Right cardiac atrium (tissue), 5 donors: ENCODE measurements at regions of chr10 and their contacts with region 1.

Region 1: GRCh38 chr10:75235375-75236177 is at the start of gene COMTD1:
- DNase-seq: peak; percentile 94 to 97 (median 97)
- ATAC-seq: peak; percentile 80 to 81
- H3K4me3 ChIP-seq: peak within 1 kb of the TSS; percentile 85
- H3K27ac ChIP-seq: peak within 1 kb of the TSS; percentile 61
- H3K4me1 ChIP-seq: no peaks in the 10 kb centered on the region
- H3K27me3 ChIP-seq: no peaks in the 10 kb centered on the region
- total RNA-seq, gene COMTD1: 17.3 to 24.3 (median 20.0) TPM

Region 2: DNA sequence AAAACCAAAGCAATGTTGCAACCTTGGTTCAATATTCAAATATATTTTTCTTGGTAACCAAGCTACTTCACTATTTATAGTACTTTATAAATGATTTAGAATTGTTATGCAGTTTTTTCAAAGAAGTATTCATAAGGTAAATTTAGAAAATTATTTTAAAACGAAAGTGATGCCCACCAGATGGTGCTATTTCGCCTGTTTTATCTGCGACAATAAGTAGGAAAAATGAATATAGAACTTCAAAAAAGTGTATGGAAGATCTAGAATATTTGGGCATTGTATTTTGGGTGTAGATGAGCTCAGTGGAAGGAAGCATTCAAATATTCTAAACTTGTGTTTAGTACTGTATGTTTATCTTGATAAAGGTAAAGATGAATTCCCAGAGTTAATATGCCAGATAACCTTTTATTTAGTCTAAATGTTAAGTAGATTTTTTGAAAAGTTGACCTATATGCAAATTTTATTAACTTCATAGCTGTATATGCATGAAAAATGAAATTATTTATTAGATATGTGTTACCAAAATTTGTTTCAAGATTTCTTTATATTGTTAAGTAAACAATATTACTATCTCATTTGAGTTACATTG is 991.4 kb before region 1 on chr10:
- intact Hi-C with region 1: loop called in 3 of 4 experiments (anchors 5 to 10 kb)
- DNase-seq: no peak
- ATAC-seq: no peak
- H3K4me3 ChIP-seq: no peak overlapping the region
- H3K27ac ChIP-seq: no peak overlapping the region
- H3K4me1 ChIP-seq: no peaks in the 10 kb centered on the region
- H3K27me3 ChIP-seq: no peaks in the 10 kb centered on the region

Region 3: DNA sequence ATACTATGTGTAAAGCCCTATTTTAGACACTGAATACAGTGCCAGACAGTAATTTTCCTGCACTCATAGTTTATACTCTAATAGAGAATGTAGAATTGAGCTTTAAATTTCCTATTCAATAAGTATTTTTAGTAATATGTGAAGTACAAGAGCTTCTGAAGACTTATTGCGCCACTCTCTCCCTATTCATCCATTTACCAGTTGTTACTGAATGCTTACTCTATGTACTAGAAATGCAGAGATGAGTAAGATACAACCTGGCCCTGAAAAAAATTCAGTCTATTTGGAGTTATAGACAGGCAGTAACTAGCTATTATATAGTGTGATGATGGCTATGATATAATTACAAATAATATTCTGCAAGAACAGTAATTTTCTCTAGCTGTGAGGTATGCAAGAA is 985.7 kb before region 1 on chr10:
- intact Hi-C with region 1: loop called in 2 of 4 experiments (anchors 5 to 10 kb)
- DNase-seq: no peak
- ATAC-seq: no peak
- H3K4me3 ChIP-seq: no peak overlapping the region
- H3K27ac ChIP-seq: no peak overlapping the region
- H3K4me1 ChIP-seq: no peaks in the 10 kb centered on the region
- H3K27me3 ChIP-seq: no peaks in the 10 kb centered on the region

Region 4: GRCh38 chr10:74826142-74827044 is 409.2 kb before region 1 on chr10 and contains the start of gene KAT6B:
- intact Hi-C with region 1: loop called in 1 of 4 experiments (anchors 10 kb)
- DNase-seq: peak; percentile 100
- ATAC-seq: peak; percentile 96
- H3K4me3 ChIP-seq: peak within 1 kb of the TSS; percentile 75
- H3K27ac ChIP-seq: peak within 1 kb of the TSS; percentile 100
- H3K4me1 ChIP-seq: peaks cover 5% of the 10 kb centered on the region
- H3K27me3 ChIP-seq: no peaks in the 10 kb centered on the region
- total RNA-seq, gene KAT6B: 44.1 to 53.0 (median 46.7) TPM

Region 5: GRCh38 chr10:75111367-75111906 is 124.1 kb before region 1 on chr10 and contains the start of gene SAMD8:
- intact Hi-C with region 1: loop called in 1 of 4 experiments (anchors 5 kb)
- DNase-seq: peak; percentile 98 to 99 (median 99)
- ATAC-seq: peak; percentile 91 to 92
- H3K4me3 ChIP-seq: peak within 1 kb of the TSS; percentile 86
- H3K27ac ChIP-seq: peak within 1 kb of the TSS; percentile 97
- H3K4me1 ChIP-seq: peaks cover 3% of the 10 kb centered on the region
- H3K27me3 ChIP-seq: no peaks in the 10 kb centered on the region
- total RNA-seq, gene SAMD8: 21.4 to 26.7 (median 24.5) TPM

Region 6: DNA sequence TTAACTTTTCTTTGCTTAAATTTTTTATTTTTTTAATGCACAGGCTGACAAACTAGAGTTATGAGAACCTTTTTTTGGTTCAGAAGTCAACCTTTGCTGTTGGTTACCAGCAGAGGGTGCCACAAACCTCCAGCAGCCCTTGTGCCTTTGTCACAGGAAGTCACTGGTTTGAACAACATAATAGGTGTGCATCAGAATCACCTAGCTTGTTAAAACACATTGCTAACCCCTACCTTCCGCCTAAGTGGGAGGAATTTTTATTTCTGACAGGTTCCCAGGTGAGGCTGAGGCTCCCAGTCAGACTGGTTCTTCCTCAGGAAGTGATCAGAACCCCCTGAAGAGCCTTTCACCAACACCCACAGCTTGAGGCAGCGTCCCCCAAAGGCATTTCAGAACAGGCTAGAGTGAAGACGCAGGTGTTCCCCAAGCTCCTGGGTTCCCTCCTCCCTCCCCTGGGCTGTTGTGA is 47.6 kb before region 1 on chr10:
- intact Hi-C with region 1: loop called in 1 of 4 experiments (anchors 5 kb)
- DNase-seq: peak in 1 of 3 donors; percentile 38
- ATAC-seq: no peak
- H3K4me3 ChIP-seq: no peak overlapping the region
- H3K27ac ChIP-seq: no peak overlapping the region
- H3K4me1 ChIP-seq: no peaks in the 10 kb centered on the region
- H3K27me3 ChIP-seq: no peaks in the 10 kb centered on the region

Region 7: GRCh38 chr10:75250910-75251309 is 15.3 kb after region 1 on chr10:
- intact Hi-C with region 1: no loop called
- DNase-seq: no peak
- ATAC-seq: no peak
- H3K4me3 ChIP-seq: no peak overlapping the region
- H3K27ac ChIP-seq: no peak overlapping the region
- H3K4me1 ChIP-seq: no peaks in the 10 kb centered on the region
- H3K27me3 ChIP-seq: no peaks in the 10 kb centered on the region